IMR-90 (cell line): ENCODE measurements at regions of chr6 and their contacts with region 1.

Region 1: GRCh38 chr6:18306977-18307376 is 42.6 kb upstream of the DEK start:
- DNase-seq: peak; percentile 48
- ATAC-seq: peak; percentile 52
- H3K4me3 ChIP-seq: no peak overlapping the region
- H3K27ac ChIP-seq: peak overlapping the region; percentile 35
- H3K4me1 ChIP-seq: peaks cover 13% of the 10 kb centered on the region
- H3K27me3 ChIP-seq: no peaks in the 10 kb centered on the region
- CTCF ChIP-seq: no peak
- POLR2A ChIP-seq: no peak
- RAD21 ChIP-seq: no peak

Region 2: GRCh38 chr6:18155150-18155863 is 151.7 kb before region 1 on chr6 and contains the start of gene KDM1B:
- CTCF ChIA-PET with region 1: no interaction called
- POLR2A ChIA-PET with region 1: no interaction called
- dilution Hi-C with region 1: no loop called
- in situ Hi-C with region 1: no loop called
- intact Hi-C with region 1: loop called (anchors 5 kb)
- DNase-seq: peak; percentile 98
- ATAC-seq: peak; percentile 98
- H3K4me3 ChIP-seq: peak within 1 kb of the TSS; percentile 99
- H3K27ac ChIP-seq: peak within 1 kb of the TSS; percentile 84
- H3K4me1 ChIP-seq: peaks cover 3% of the 10 kb centered on the region
- H3K27me3 ChIP-seq: no peaks in the 10 kb centered on the region
- CTCF ChIP-seq: no peak
- POLR2A ChIP-seq: peak; percentile 52; the same call in 1 of the 2 replicates
- RAD21 ChIP-seq: no peak
- total RNA-seq, gene KDM1B: 16.7 and 16.9 TPM in 2 replicates

Region 3: GRCh38 chr6:18343741-18344140 is 36.8 kb after region 1 on chr6:
- CTCF ChIA-PET with region 1: no interaction called
- POLR2A ChIA-PET with region 1: no interaction called
- dilution Hi-C with region 1: no loop called
- in situ Hi-C with region 1: no loop called
- intact Hi-C with region 1: loop called (anchors 1 kb)
- DNase-seq: peak; percentile 95
- ATAC-seq: peak; percentile 45; the same call in 1 of the 2 replicates
- H3K4me3 ChIP-seq: no peak overlapping the region
- H3K27ac ChIP-seq: no peak overlapping the region
- H3K4me1 ChIP-seq: peaks cover 2% of the 10 kb centered on the region; the same call in 1 of the 2 replicates
- H3K27me3 ChIP-seq: no peaks in the 10 kb centered on the region
- CTCF ChIP-seq: no peak
- POLR2A ChIP-seq: no peak
- RAD21 ChIP-seq: no peak